ENCODE measurements at regions of chr12 and their contacts with region 1.

Region 1: DNA sequence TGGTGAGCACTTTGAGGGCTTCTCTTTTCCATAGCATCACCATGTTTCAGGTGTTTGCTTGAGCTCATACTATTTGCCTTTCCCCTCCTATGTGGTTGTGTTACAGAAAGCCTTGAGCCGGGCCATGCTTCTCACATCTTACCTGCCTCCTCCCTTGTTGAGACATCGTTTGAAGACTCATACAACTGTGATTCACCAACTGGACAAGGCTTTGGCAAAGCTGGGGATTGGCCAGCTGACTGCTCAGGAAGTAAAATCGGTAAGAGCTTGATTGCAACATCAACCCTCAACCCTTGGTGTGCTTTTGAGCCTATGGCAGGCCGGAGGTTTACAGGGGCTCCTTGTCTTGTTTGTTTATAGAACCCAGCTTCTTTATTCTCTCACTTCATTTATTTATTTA is 8.1 kb downstream of the LETMD1 start:
- DNase-seq: no peak

Region 2: GRCh38 chr12:50351120-50352043 is 704.9 kb before region 1 on chr12:
- intact Hi-C with region 1: no loop called
- DNase-seq: no peak

Region 3: GRCh38 chr12:51070004-51070403 is 13.8 kb after region 1 on chr12:
- intact Hi-C with region 1: no loop called
- DNase-seq: no peak

Region 4: GRCh38 chr12:51103977-51104376 is 47.7 kb after region 1 on chr12:
- intact Hi-C with region 1: loop called in 1 of 2 experiments (anchors 2 kb)
- DNase-seq: no peak

Region 5: DNA sequence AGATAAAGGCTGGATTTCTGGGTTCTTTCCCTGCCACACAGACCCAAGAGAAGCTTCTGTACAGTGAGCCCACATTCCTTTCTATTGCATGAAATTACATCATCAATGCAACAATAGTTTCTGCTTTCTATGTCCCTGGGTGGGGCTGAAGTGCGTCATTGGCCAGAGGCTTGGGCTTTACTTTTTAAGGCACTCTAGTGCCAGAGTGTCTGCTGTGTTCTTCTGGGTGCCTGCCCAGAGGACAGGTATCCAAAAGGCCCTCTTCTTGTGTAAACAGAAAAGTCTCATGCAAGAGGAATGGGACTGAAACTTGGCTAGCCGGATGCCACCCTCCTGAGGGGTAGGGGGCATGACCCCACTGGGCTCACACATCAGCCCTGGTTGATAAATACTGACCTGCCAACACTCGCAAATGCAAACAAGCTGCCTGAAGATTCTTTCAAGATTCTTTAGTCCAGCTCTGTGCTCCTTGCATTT is 1224.1 kb after region 1 on chr12:
- intact Hi-C with region 1: loop called in 1 of 2 experiments (anchors 5 kb)
- DNase-seq: peak; percentile 89